ENCODE measurements at regions of chr16 and their contacts with region 1.

Region 1: GRCh38 chr16:28863929-28864793 is 518 bp downstream of the SH2B1 start:
- DNase-seq: no peak
- H3K4me3 ChIP-seq: peak overlapping the region; percentile 86 to 100 (median 93)
- H3K27ac ChIP-seq: no peak overlapping the region
- H3K4me1 ChIP-seq: peaks cover 0 to 8% (median 3%) of the 10 kb centered on the region in 4 experiments; a peak in 6 of 7 replicates
- H3K27me3 ChIP-seq: no peaks in the 10 kb centered on the region
- CTCF ChIP-seq: no peak
- EP300 ChIP-seq: peak in 1 of 2 experiments; percentile 82; a peak in 1 of 3 replicates
- POLR2A ChIP-seq: no peak
- RAD21 ChIP-seq: no peak

Region 2: GRCh38 chr16:28823872-28824716 is 40.1 kb before region 1 on chr16:
- CTCF ChIA-PET with region 1: no interaction called
- POLR2A ChIA-PET with region 1: interaction called, 49 read pairs
- DNase-seq: peak; percentile 92 to 95
- H3K4me3 ChIP-seq: peak overlapping the region; percentile 88 to 97 (median 92)
- H3K27ac ChIP-seq: peak overlapping the region; percentile 96
- H3K4me1 ChIP-seq: peaks cover 0 to 3% (median under 1%) of the 10 kb centered on the region in 4 experiments; a peak in 3 of 7 replicates
- H3K27me3 ChIP-seq: no peaks in the 10 kb centered on the region
- CTCF ChIP-seq: no peak
- EP300 ChIP-seq: no peak
- POLR2A ChIP-seq: peak; percentile 24 to 82
- RAD21 ChIP-seq: no peak

Region 3: DNA sequence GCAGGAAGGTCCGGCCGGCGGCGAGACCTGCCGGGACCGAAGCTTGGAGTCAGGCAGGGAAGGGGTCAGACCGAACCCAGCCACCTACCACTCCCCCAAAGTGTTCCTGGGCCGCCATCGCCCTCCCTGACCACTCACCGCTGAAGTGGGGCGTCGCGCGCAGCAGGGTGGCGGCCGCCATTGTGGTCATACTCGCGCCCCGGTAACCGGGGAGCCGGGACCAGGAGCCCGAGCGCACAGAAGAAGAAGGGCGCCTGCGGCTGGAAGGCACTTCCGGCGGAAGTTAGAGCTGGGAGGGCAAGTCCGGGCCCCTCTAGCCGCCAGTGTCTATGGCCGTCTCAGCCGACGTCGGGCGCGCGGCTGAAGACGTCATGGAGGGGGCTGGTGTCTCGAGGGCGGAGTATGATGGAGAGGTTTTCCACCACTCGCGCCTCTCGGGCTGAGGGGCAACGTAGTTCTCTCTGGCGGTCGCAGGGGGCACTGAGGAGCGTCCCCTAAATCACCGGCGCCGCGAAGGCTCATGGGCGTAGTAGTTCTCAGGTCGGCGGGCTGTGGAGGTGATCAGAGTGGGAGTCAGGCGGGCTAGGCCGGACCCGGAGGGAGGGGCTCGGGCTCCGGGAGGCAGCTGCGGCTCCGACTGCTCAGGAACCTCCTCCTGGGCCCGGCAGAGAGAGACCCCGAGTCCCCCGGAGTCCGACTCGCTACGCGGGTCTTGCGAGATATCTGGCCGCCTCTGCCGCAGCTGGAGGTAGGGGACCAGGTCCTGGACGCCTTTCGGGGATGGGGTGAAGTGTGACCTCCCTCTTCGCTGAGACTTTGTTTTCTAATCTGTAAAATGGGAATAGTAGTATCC is 17.9 kb before region 1 on chr16 and contains the start of gene TUFM:
- CTCF ChIA-PET with region 1: interaction called, 34 read pairs
- POLR2A ChIA-PET with region 1: interaction called, 164 read pairs
- DNase-seq: peak; percentile 95 to 98
- H3K4me3 ChIP-seq: peak within 1 kb of the TSS; percentile 87 to 99 (median 98)
- H3K27ac ChIP-seq: peak within 1 kb of the TSS; percentile 70; the same call in 1 of the 2 replicates
- H3K4me1 ChIP-seq: peaks cover 0 to 7% (median 3%) of the 10 kb centered on the region in 4 experiments; a peak in 5 of 7 replicates
- H3K27me3 ChIP-seq: no peaks in the 10 kb centered on the region
- CTCF ChIP-seq: peak; percentile 83 to 93 (median 86)
- EP300 ChIP-seq: peak in 1 of 2 experiments; percentile 88; a peak in 2 of 3 replicates
- POLR2A ChIP-seq: no peak; a peak in 1 of 3 replicates
- RAD21 ChIP-seq: peak; percentile 32 to 36; a peak in 3 of 4 replicates
- total RNA-seq, gene TUFM: 243 and 249 TPM in 2 replicates

Region 4: DNA sequence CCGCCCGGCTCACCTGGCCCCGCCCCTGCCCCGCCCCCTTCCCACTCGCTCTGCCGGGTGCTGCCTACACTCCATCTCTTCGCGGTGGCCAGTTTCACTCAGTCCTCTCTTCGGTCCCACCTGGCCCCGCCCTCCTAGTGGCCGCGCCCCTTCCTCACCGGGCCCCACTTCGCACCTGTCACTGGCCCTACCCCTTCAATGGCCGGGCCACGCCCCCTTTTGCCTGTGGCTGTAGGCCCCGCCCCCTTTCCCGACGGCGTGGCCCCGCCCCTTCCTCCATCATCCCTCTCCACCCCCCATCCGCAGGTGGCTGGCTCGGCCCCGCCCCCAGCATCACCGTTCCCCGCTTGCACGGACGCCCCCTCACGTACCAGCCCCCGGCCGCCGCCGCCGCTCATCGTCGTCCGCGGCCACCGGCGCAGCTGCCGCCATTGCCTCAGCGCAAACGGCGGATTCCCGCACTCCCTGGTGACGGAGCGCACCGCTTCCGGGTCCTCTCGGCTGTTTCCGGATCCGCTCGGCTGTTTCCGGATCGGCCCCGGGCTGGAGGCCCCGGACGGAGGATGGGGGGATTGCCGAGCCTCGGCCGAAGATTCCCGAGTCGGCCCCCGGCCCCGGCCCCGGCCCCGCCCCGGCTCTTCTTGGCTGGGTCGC is 60.7 kb after region 1 on chr16 and contains the start of gene RABEP2:
- CTCF ChIA-PET with region 1: interaction called, 6 read pairs
- POLR2A ChIA-PET with region 1: interaction called, 17 read pairs
- DNase-seq: peak; percentile 95 to 100
- H3K4me3 ChIP-seq: peak within 1 kb of the TSS; percentile 74 to 84 (median 79)
- H3K27ac ChIP-seq: peak within 1 kb of the TSS; percentile 90
- H3K4me1 ChIP-seq: peaks cover 0 to 6% (median 0%) of the 10 kb centered on the region in 4 experiments; a peak in 3 of 7 replicates
- H3K27me3 ChIP-seq: no peaks in the 10 kb centered on the region
- CTCF ChIP-seq: no peak
- EP300 ChIP-seq: no peak
- POLR2A ChIP-seq: no peak
- RAD21 ChIP-seq: no peak
- total RNA-seq, gene RABEP2: 13.3 and 14.9 TPM in 2 replicates

Region 5: GRCh38 chr16:28950648-28951409 is 86.7 kb after region 1 on chr16 and contains the start of gene NFATC2IP:
- CTCF ChIA-PET with region 1: interaction called, 5 read pairs
- POLR2A ChIA-PET with region 1: interaction called, 15 read pairs
- DNase-seq: peak; percentile 99
- H3K4me3 ChIP-seq: peak within 1 kb of the TSS; percentile 76 to 98 (median 77)
- H3K27ac ChIP-seq: no peak within 1 kb of the TSS; the same call in 1 of the 2 replicates
- H3K4me1 ChIP-seq: peaks cover 0 to 7% (median under 1%) of the 10 kb centered on the region in 4 experiments; a peak in 3 of 7 replicates
- H3K27me3 ChIP-seq: no peaks in the 10 kb centered on the region
- CTCF ChIP-seq: no peak
- EP300 ChIP-seq: no peak
- POLR2A ChIP-seq: peak in 1 of 2 experiments; percentile 47; a peak in 1 of 3 replicates
- RAD21 ChIP-seq: no peak
- total RNA-seq, gene NFATC2IP: 54.4 and 56.0 TPM in 2 replicates